ENCODE measurements at regions of chr10 and their contacts with region 1.

Region 1: GRCh38 chr10:17617031-17617911 is at the start of gene HACD1:
- DNase-seq: peak; percentile 86

Region 2: DNA sequence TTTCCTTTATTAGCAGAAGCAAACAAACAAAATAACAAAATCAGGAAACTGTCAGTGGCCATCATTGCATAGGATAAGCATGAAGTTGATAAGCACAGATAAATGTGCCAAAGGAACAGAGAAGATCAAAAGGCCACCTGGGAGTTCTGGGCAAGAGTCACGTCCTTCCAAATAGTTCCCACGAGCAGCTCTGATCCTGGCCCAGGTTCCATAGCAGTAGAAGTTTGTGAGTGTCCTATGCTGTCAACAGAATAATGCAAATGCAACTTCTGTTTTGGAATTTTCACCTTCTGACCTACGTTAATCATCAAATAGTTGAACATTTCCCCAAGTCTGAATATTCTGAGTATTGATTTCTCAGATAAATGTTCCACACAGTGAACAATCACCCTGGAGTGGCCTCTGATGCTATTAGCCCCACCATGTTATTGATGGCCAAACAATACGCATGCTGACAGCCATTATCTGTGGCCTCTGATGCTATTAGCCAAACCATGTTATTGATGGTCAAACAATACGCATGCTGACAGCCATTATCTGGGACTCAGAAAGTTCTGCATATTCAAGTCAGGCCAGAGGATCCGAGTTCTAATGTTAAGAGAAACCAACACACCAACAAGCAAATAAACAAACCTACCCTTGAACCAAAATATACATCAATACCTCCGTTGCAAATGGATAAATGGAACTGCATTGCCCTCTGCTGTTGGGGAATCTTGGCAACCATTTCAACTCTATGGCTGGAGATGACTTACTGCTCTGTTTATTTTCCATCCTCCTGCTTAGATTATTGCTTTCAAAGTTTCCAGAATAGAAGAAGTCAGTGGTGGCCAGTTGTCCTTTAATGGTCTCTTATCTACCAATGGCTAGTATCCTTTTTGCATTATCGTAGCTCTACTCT is 255.2 kb after region 1 on chr10:
- in situ Hi-C with region 1: loop called (anchors 25 kb)
- DNase-seq: peak; percentile 57

Region 3: GRCh38 chr10:18238870-18239485 is 621.7 kb after region 1 on chr10:
- in situ Hi-C with region 1: loop called (anchors 25 kb)
- DNase-seq: peak; percentile 21